ENCODE measurements at regions of chr6 and their contacts with region 1.

Region 1: DNA sequence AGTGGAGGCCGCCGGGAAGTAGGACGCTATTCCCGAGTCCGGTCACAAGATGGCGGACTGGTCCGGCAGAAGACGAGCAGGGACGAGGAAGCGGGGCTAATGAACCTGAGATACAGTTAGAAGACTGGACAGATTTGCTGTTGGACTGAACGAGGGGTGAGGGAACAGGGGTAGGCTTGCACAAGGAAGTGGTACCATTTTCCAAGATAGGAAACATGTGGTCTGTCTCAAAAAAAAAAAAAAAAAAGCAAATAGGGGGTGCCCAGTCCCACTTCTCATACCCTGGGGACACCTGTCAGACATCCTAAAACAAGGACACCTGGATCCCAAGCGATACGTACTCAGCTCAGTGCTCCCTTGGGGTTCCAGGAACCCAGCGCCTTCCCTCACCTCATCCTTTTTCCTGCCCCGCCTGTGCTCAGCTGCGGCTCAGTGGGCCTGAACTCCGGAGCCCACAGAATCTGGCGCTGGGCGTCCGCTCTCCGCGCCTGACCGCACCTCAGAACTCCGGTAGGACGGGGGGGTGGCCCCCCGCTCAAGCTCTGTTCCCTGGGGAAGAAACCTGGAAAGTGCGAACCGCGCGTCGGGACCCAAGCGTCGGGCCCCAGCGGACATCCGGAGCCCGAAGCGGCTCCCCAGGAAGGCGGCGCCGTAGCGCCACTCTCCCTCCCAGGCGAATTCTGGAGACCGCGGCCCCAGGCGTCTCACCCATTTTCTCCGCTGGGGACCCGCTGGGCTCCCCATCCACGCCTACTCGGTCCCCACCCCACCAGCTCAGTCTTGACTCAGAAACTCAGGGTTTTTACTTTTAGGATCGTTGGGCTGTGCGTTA is at the start of gene LY6G5C:
- DNase-seq: peak; percentile 90
- H3K4me3 ChIP-seq: peak within 1 kb of the TSS; percentile 47 to 62
- H3K27ac ChIP-seq: peak within 1 kb of the TSS in 1 of 2 donors; percentile 61
- H3K4me1 ChIP-seq: peaks cover 12% of the 10 kb centered on the region
- H3K27me3 ChIP-seq: no peaks in the 10 kb centered on the region
- CTCF ChIP-seq: peak; percentile 47 to 59 (median 58)
- POLR2A ChIP-seq: no peak
- total RNA-seq, gene LY6G5C: 8.7 to 18.3 TPM

Region 2: GRCh38 chr6:31834434-31835198 is 153.6 kb after region 1 on chr6:
- intact Hi-C with region 1: loop called (anchors 5 kb)
- DNase-seq: peak; percentile 95
- H3K4me3 ChIP-seq: peak overlapping the region; percentile 89 to 93
- H3K27ac ChIP-seq: peak overlapping the region; percentile 97 to 98
- H3K4me1 ChIP-seq: peaks cover 27% of the 10 kb centered on the region
- H3K27me3 ChIP-seq: no peaks in the 10 kb centered on the region
- CTCF ChIP-seq: peak in 1 of 3 experiments; percentile 7
- POLR2A ChIP-seq: no peak

Measured in testis (tissue), 5 donors.